Spleen (tissue), 13 donors: ENCODE measurements at regions of chr3 and their contacts with region 1.

Region 1: DNA sequence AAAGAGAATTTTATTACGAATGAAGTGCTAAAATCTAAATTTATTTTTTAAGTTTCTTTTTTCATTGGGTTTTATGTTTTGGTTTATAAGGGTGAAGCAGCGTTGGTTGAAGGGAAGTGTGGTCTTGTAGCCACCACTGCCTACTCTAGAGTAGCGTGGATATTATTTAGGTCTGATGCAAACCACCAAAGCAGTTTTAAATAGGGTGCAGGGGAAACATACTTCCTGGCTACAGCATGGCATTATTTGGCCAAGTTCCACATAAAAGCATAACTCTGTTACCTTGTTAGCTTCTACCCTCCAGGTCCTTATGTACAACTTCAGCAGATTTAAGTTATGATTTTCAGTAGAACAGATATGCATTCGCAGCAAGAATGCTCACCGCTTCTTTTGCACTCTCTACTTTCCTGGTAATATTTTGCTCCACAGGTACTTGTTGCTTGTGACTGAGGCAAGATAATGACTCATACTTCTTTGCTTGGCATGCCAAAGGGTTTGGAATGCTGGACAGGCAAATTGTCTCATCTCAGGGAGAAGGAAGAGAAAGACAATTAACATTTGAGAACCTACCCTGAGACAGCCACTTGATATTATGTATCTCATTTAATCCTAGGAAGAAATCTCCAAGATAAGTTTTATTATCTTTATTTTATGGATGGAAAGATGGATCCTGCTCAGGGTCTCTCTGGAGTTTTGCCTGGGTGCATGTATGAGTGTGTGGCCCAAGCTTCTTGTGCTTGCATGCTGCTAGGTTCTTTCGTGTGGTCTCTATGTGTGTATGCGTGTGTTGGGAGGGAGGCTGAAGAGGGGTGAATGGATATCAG is 5.4 kb downstream of the TGFBR2 start:
- DNase-seq: no peak
- H3K4me3 ChIP-seq: peak overlapping the region in 6 of 8 donors; percentile 13 to 88 (median 38)
- H3K27ac ChIP-seq: peak overlapping the region; percentile 9 to 100 (median 100)
- H3K4me1 ChIP-seq: peaks cover 62 to 91% (median 79%) of the 10 kb centered on the region in 6 donors
- H3K27me3 ChIP-seq: no peaks in the 10 kb centered on the region
- CTCF ChIP-seq: no peak
- POLR2A ChIP-seq: no peak

Region 2: GRCh38 chr3:30188713-30189112 is 423.1 kb before region 1 on chr3:
- intact Hi-C with region 1: no loop called
- DNase-seq: no peak
- H3K4me3 ChIP-seq: no peak overlapping the region
- H3K27ac ChIP-seq: no peak overlapping the region
- H3K4me1 ChIP-seq: peaks cover 0 to 9% (median 0%) of the 10 kb centered on the region in 6 donors
- H3K27me3 ChIP-seq: no peaks in the 10 kb centered on the region
- CTCF ChIP-seq: no peak
- POLR2A ChIP-seq: no peak

Region 3: GRCh38 chr3:30437171-30437601 is 174.6 kb before region 1 on chr3:
- intact Hi-C with region 1: no loop called
- DNase-seq: no peak
- H3K4me3 ChIP-seq: no peak overlapping the region
- H3K27ac ChIP-seq: peak overlapping the region in 2 of 8 donors; percentile 4 to 14
- H3K4me1 ChIP-seq: peaks cover 0 to 44% (median 22%) of the 10 kb centered on the region in 6 donors
- H3K27me3 ChIP-seq: no peaks in the 10 kb centered on the region
- CTCF ChIP-seq: no peak
- POLR2A ChIP-seq: no peak

Region 4: GRCh38 chr3:30659270-30660130 is 47.7 kb after region 1 on chr3:
- intact Hi-C with region 1: loop called (anchors 10 kb)
- DNase-seq: no peak
- H3K4me3 ChIP-seq: peak overlapping the region in 1 of 8 donors; percentile 4
- H3K27ac ChIP-seq: peak overlapping the region; percentile 30 to 100 (median 90)
- H3K4me1 ChIP-seq: peaks cover 79 to 100% (median 100%) of the 10 kb centered on the region in 6 donors
- H3K27me3 ChIP-seq: no peaks in the 10 kb centered on the region
- CTCF ChIP-seq: no peak
- POLR2A ChIP-seq: no peak